ENCODE measurements at regions of chr11 and their contacts with region 1.

Region 1: GRCh38 chr11:17978553-17979287 is 34.1 kb downstream of the SERGEF start:
- DNase-seq: peak; percentile 63 to 83 (median 80)
- ATAC-seq: peak; percentile 92 to 95 (median 92)
- H3K4me3 ChIP-seq: no peak overlapping the region
- H3K27ac ChIP-seq: peak overlapping the region in 1 of 3 donors; percentile 22
- H3K4me1 ChIP-seq: peaks cover 0 to 27% (median 9%) of the 10 kb centered on the region in 4 donors
- H3K27me3 ChIP-seq: no peaks in the 10 kb centered on the region
- CTCF ChIP-seq: peak; percentile 84 to 90 (median 86)
- POLR2A ChIP-seq: no peak

Region 2: DNA sequence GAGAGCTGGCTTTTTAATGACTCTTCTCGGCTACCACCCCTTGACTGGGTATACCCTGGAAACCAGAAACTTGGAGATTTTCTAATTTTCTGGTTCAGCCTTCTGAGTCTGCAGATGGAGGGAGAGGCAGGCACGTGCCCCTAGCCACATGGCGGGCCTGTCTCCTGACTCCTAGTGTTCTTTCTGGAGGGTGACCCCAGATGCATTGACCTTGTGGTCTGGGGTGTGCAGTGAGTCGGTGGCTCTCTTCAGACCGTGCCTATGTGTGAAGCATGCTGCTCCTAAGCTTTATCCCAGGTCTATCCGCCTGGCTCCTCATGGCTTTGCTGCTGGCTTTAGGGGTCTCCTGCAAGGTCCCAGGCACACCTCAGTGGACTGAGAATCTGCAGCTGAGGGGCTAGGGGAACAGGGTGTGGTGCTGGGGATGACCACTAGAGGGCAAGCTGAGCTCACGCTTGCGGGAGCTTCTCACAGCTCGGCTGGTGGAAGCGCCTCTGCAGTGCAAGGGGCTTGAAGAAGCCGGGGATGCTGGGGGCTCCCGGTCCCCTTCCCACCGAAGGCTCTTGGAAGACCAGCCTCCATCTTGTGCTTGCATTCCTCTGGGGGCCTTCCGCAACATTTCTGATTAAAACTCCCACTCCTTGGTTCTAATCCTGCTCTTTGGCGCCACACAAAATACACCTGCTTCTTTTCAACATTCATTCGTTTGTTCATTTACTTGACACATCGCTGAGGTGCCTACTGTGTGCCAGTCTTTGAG is 379.8 kb before region 1 on chr11:
- intact Hi-C with region 1: loop called (anchors 10 kb)
- DNase-seq: peak; percentile 71 to 80 (median 77)
- ATAC-seq: peak; percentile 86 to 98 (median 93)
- H3K4me3 ChIP-seq: no peak overlapping the region
- H3K27ac ChIP-seq: no peak overlapping the region
- H3K4me1 ChIP-seq: no peaks in the 10 kb centered on the region
- H3K27me3 ChIP-seq: no peaks in the 10 kb centered on the region
- CTCF ChIP-seq: peak; percentile 88 to 96 (median 91)
- POLR2A ChIP-seq: no peak

Region 3: DNA sequence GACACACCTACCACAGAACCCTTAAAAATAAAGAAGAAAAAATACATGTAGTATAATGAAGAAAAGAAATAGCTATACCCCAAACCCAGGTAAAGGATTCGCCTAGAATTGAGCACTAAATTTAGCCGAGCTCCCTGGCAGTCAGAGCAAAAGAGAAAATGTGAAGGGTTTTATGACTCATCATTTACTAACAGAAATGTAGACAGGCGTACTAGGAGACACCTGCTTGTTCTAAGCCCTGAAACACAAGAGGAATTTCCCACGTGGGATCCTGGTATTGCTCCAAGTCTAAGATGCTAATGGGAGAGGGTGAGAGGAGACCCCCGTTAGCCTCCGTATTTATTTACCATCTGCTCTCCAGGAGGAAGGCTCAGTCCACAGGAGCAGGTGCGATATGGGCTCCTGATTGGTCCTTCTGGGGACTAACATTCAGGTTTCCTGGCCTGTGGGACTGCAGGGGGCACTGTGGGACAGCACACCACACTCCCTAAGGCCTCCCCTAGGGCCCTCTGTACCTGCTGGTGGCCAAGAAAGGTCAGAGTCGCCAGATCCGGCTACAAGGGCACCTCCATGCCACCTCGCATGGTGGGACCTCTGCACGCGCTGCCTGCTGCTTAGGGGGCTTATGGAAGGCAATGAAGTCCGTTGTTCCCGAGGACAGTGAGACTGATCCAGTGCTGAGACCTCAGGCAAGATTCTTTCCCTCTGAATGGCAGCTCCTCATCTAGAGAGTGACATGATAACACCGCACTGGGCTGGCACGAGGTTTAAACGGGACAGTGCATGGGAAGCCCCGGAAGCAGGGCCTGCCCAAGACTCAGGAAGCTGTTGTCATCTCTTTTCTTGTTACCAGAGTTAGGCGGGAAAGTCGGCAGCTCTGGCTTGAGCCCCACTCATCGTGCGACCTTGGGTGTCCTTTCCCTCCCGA is 218.4 kb before region 1 on chr11:
- intact Hi-C with region 1: loop called in 1 of 2 experiments (anchors 5 kb)
- DNase-seq: peak; percentile 75 to 78 (median 77)
- ATAC-seq: peak; percentile 98 to 100 (median 98)
- H3K4me3 ChIP-seq: no peak overlapping the region
- H3K27ac ChIP-seq: no peak overlapping the region
- H3K4me1 ChIP-seq: no peaks in the 10 kb centered on the region
- H3K27me3 ChIP-seq: no peaks in the 10 kb centered on the region
- CTCF ChIP-seq: peak; percentile 68 to 86 (median 80)
- POLR2A ChIP-seq: no peak

Region 4: GRCh38 chr11:18132341-18132740 is 153.6 kb after region 1 on chr11 and contains the start of gene MRGPRX3:
- intact Hi-C with region 1: no loop called
- DNase-seq: no peak
- ATAC-seq: no peak
- H3K4me3 ChIP-seq: no peak within 1 kb of the TSS
- H3K27ac ChIP-seq: no peak within 1 kb of the TSS
- H3K4me1 ChIP-seq: no peaks in the 10 kb centered on the region
- H3K27me3 ChIP-seq: no peaks in the 10 kb centered on the region
- CTCF ChIP-seq: no peak
- POLR2A ChIP-seq: no peak
- total RNA-seq, gene MRGPRX3: 0.16 TPM in 1 of 6 experiments, not detected in the others